Gastrocnemius medialis (tissue), 4 donors: ENCODE measurements at regions of chr5 and their contacts with region 1.

Region 1: GRCh38 chr5:178279725-178280438 is 47.3 kb upstream of the PHYKPL start:
- DNase-seq: peak; percentile 65 to 74
- ATAC-seq: peak; percentile 78 to 91
- H3K4me3 ChIP-seq: no peak overlapping the region
- H3K27ac ChIP-seq: no peak overlapping the region
- H3K4me1 ChIP-seq: no peaks in the 10 kb centered on the region
- H3K27me3 ChIP-seq: no peaks in the 10 kb centered on the region
- CTCF ChIP-seq: peak; percentile 78 to 93 (median 91)
- POLR2A ChIP-seq: no peak

Region 2: GRCh38 chr5:178461004-178461730 is 181.3 kb after region 1 on chr5:
- in situ Hi-C with region 1: no loop called
- intact Hi-C with region 1: loop called (anchors 5 kb)
- DNase-seq: peak; percentile 49 to 74
- ATAC-seq: peak; percentile 97 to 100
- H3K4me3 ChIP-seq: no peak overlapping the region
- H3K27ac ChIP-seq: no peak overlapping the region
- H3K4me1 ChIP-seq: peaks cover 0 to 3% of the 10 kb centered on the region in 2 donors
- H3K27me3 ChIP-seq: no peaks in the 10 kb centered on the region
- CTCF ChIP-seq: peak; percentile 69 to 88 (median 80)
- POLR2A ChIP-seq: no peak

Region 3: DNA sequence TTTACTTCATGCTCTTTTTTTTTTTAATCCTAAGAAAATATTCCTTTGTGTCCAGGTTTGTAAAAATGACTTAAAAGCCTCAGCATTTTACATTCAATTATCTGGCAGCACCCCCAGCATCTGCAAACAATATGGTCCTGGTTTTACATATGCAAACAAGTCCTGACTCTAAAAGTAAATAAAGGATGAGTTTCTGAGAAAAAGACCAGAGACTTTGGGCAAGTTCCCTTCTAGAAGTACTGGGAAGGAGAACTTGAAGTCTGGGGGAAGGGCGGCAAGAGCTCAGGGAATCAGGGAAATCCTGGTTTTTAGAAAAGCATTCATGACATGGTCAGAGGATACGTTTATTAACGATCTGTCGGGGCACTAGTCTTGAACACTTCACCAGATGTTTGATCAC is 284.5 kb after region 1 on chr5:
- in situ Hi-C with region 1: loop called in 2 of 4 experiments (anchors 10 kb)
- intact Hi-C with region 1: no loop called
- DNase-seq: no peak
- ATAC-seq: peak in 1 of 2 donors; percentile 26
- H3K4me3 ChIP-seq: no peak overlapping the region
- H3K27ac ChIP-seq: no peak overlapping the region
- H3K4me1 ChIP-seq: no peaks in the 10 kb centered on the region
- H3K27me3 ChIP-seq: no peaks in the 10 kb centered on the region
- CTCF ChIP-seq: no peak
- POLR2A ChIP-seq: no peak

Region 4: GRCh38 chr5:178732281-178732680 is 452.4 kb after region 1 on chr5:
- in situ Hi-C with region 1: no loop called
- intact Hi-C with region 1: loop called (anchors 10 kb)
- DNase-seq: no peak
- ATAC-seq: no peak
- H3K4me3 ChIP-seq: no peak overlapping the region
- H3K27ac ChIP-seq: no peak overlapping the region
- H3K4me1 ChIP-seq: peaks cover 0 to 4% of the 10 kb centered on the region in 2 donors
- H3K27me3 ChIP-seq: no peaks in the 10 kb centered on the region
- CTCF ChIP-seq: no peak
- POLR2A ChIP-seq: no peak

Region 5: GRCh38 chr5:179495906-179496455 is 1216.1 kb after region 1 on chr5:
- in situ Hi-C with region 1: loop called in 1 of 4 experiments (anchors 25 kb)
- intact Hi-C with region 1: no loop called
- DNase-seq: no peak
- ATAC-seq: no peak
- H3K4me3 ChIP-seq: no peak overlapping the region
- H3K27ac ChIP-seq: no peak overlapping the region
- H3K4me1 ChIP-seq: no peaks in the 10 kb centered on the region
- H3K27me3 ChIP-seq: no peaks in the 10 kb centered on the region
- CTCF ChIP-seq: no peak
- POLR2A ChIP-seq: no peak